Dorsolateral prefrontal cortex (tissue), 120 donors: ENCODE measurements at regions of chr6 and their contacts with region 1.

Region 1: DNA sequence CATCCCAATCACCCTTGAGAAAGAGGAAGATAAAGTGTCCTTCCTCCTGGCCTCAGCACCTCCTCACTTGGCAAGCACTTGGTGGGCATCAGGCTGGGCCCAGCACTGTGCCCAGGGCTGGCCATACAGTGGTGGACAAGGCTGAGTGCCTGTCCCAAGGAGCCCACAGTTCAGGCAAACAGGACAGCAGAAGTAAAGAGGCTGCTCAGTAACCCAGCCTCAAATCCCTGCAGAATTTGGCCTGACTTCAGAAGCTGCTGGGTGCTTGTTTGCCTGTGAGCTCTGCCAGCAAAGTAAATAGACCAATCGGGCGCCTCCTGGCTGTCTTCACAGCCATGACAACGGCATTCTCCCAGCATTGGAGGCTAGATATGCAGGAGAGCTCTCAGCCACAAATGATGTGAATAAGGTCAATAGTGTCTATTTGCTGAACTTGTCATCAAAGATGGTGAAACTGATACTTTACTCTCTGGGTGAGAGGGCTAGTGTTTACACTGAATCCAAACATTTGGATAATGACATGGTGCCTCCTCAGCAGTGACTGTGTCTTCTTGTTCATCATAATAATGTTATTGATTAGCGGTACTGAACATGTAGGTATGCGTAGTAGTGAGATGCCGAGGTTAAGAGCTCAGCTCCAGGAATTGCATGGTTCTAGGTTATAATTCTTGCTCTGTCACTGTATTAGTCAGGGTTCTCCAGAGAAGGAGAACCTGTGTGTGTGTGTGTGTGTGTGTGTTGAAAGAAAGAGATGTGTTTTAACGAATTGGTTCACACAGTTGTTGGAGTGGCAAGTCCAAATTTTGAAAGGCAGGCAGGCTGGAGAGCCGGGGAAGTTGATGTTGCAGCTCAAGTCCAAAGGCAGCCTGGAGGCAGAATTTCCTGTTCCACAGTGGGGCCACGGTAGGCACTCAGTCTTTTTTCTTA is 36.8 kb upstream of the FANCE start:
- DNase-seq: peak; percentile 80 to 95 (median 91)
- H3K4me3 ChIP-seq: peak overlapping the region in 2 of 59 donors; percentile 20 to 35
- H3K27ac ChIP-seq: peak overlapping the region in 57 of 59 donors; percentile 21 to 89 (median 76)
- H3K27me3 ChIP-seq: no peaks in the 10 kb centered on the region
- CTCF ChIP-seq: peak; percentile 67 to 95 (median 86)

Region 2: DNA sequence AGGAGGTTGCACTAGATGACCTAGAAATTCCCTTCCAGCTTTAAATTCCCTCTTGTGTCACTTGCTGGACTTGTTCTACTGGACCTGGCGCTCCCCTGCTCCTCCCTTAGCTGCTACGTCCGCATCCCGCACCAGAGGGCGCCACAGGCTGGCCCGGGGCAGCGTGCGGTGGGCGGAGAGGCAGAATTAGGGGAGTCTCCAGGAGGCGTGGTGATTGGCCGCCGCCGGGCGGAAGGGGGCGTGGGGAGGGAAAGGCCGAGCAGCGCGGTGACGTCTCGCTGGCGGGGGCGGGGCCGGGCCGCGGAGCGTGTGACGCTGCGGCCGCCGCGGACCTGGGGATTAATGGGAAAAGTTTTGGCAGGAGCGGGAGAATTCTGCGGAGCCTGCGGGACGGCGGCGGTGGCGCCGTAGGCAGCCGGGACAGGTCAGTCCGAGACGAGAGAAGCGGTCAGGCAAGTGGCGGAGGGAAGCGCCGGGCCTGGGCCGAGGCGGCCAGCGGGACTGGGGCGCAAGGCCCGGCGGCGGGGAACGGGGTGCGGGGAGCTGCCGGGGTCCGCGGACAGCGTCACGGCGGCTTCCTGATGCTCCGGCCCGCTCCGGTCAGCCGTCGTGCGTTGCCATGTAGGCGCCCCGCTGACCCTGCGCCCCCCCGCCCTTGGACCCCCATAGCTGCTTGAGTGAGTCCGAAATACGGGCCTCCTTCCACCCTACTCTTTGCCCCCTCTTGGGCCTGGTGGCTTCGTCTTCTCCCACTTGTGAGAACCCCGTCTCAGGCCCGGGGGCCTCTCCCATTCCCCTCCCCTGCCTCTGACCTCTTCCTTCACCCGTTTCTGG is 72.9 kb before region 1 on chr6 and contains the start of gene PPARD:
- intact Hi-C with region 1: loop called (anchors 1 kb)
- DNase-seq: peak; percentile 96 to 100 (median 98)
- H3K4me3 ChIP-seq: peak within 1 kb of the TSS; percentile 70 to 99 (median 92)
- H3K27ac ChIP-seq: peak within 1 kb of the TSS in 57 of 59 donors; percentile 40 to 97 (median 87)
- H3K27me3 ChIP-seq: no peaks in the 10 kb centered on the region
- CTCF ChIP-seq: peak; percentile 90 to 100 (median 99)
- total RNA-seq, gene PPARD: 26.8 to 49.1 (median 36.9) TPM

Region 3: GRCh38 chr6:35359751-35360348 is 55.5 kb before region 1 on chr6:
- intact Hi-C with region 1: loop called (anchors 5 kb)
- DNase-seq: peak in 7 of 10 donors; percentile 24 to 74 (median 55)
- H3K4me3 ChIP-seq: peak overlapping the region in 1 of 59 donors; percentile 25
- H3K27ac ChIP-seq: peak overlapping the region; percentile 8 to 92 (median 77)
- H3K27me3 ChIP-seq: no peaks in the 10 kb centered on the region
- CTCF ChIP-seq: no peak

Region 4: GRCh38 chr6:35427851-35428321 is 12.6 kb after region 1 on chr6:
- intact Hi-C with region 1: no loop called
- DNase-seq: no peak
- H3K4me3 ChIP-seq: no peak overlapping the region
- H3K27ac ChIP-seq: no peak overlapping the region
- H3K27me3 ChIP-seq: no peaks in the 10 kb centered on the region
- CTCF ChIP-seq: no peak

Region 5: DNA sequence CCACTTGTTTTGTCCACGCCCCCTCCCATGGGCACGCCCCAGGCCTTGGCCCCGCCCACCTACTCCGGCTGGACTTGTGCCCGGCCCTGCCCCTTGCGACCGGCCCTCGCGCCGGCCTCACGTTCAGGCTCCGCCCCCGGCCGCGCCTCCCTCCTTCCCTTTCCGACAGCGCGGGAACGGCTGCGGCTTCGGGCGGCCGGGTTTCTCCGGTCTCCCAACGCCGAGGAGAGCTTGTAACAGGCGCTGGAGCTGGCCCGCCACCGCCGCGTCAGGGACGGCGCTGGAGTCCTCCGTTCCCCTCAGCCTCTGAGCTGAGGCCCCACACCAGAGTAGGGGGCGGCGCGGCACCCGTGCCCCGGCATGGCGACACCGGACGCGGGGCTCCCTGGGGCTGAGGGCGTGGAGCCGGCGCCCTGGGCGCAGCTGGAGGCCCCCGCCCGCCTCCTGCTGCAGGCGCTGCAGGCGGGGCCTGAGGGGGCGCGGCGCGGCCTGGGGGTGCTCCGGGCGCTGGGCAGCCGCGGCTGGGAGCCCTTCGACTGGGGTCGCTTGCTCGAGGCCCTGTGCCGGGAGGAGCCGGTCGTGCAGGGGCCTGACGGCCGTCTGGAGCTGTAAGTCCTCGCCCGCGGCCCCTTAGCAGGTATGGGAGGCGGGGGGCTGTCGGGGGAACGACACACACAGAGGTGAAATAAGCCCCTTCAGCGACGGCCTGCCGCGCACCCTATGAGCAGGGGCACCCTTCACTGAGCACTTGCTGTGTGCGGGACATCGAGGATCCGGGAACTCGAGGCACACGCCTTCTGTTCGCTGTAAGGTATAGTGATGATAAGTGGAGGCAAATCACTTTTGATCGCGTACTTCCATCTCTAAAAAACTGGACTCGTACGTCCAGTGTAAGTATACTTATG is 37.1 kb after region 1 on chr6 and contains the start of gene FANCE:
- intact Hi-C with region 1: loop called (anchors 2 to 5 kb)
- DNase-seq: peak; percentile 86 to 94 (median 90)
- H3K4me3 ChIP-seq: peak within 1 kb of the TSS; percentile 52 to 86 (median 73)
- H3K27ac ChIP-seq: peak within 1 kb of the TSS in 44 of 59 donors; percentile 1 to 85 (median 66)
- H3K27me3 ChIP-seq: no peaks in the 10 kb centered on the region
- CTCF ChIP-seq: peak in 30 of 56 donors; percentile 11 to 55 (median 31)
- total RNA-seq, gene FANCE: 1.8 to 5.5 (median 3.2) TPM

Region 6: GRCh38 chr6:35573495-35574110 is 158.3 kb after region 1 on chr6:
- intact Hi-C with region 1: no loop called
- DNase-seq: no peak
- H3K4me3 ChIP-seq: no peak overlapping the region
- H3K27ac ChIP-seq: no peak overlapping the region
- H3K27me3 ChIP-seq: no peaks in the 10 kb centered on the region
- CTCF ChIP-seq: no peak